ENCODE measurements at regions of chr13 and their contacts with region 1.

Region 1: DNA sequence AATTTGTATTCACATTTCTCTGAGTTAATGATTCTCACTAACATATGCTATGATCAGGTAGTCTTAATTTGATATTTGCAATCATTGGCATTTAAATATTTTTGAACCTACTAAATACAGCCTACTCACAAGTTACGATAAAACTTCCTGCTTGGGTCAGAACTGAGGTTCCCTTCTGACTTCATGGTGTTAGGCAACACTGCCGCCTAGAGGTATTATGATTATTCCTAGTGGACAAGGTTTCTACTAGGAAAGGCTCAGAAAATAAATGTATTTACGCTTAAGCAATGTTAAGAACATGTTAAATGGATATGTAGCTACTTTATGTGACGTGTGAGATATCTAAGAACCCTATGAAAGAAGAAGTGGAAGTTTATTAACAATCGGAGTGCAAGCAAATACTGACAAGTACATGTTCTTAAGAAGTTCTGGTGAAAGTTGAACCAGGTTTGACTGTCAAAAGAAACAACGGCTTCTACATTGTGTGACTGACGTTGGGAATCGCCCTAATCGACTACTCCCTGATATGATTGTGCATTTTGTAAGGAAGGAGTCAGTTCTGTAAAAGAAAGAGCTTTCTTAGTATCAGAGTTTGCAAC is 1395.8 kb downstream of the SLITRK5 start:
- DNase-seq: peak; percentile 46
- ATAC-seq: peak; percentile 55
- H3K4me3 Mint-ChIP-seq: no peak overlapping the region
- H3K27ac Mint-ChIP-seq: no peak overlapping the region
- H3K4me1 Mint-ChIP-seq: no peaks in the 10 kb centered on the region
- H3K27me3 Mint-ChIP-seq: no peaks in the 10 kb centered on the region

Region 2: GRCh38 chr13:87671031-87671752 is 1395.8 kb before region 1 on chr13 and contains the start of gene SLITRK5:
- CTCF ChIA-PET with region 1: no interaction called
- POLR2A ChIA-PET with region 1: no interaction called
- intact Hi-C with region 1: loop called in 1 of 2 experiments (anchors 5 kb)
- DNase-seq: peak; percentile 84
- ATAC-seq: peak; percentile 95
- H3K4me3 Mint-ChIP-seq: peak within 1 kb of the TSS; percentile 52
- H3K27ac Mint-ChIP-seq: no peak within 1 kb of the TSS
- H3K4me1 Mint-ChIP-seq: peaks cover 23% of the 10 kb centered on the region
- H3K27me3 Mint-ChIP-seq: peaks cover 43% of the 10 kb centered on the region
- total RNA-seq, gene SLITRK5: not detected

Region 3: DNA sequence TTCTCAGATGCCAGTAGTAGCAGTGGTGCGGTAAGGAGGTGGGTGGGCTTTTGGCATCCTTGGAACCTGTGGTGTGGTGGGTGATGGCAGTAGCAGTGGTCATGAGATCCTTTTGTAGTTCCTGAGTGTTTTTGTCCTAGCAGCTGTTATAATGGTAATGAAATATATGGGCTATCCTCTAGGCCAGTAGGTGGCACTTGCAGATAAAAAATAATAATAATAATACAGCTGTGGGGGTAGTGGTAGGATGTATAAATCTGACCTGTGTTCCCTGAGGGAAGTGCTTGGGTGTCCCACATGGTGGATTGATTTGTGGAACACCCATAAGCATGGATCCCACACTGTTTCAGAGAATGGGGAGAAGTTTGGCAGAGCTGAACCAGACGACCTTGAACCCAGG is 1061.8 kb before region 1 on chr13:
- CTCF ChIA-PET with region 1: no interaction called
- POLR2A ChIA-PET with region 1: no interaction called
- intact Hi-C with region 1: loop called (anchors 2 to 5 kb)
- DNase-seq: no peak
- ATAC-seq: no peak
- H3K4me3 Mint-ChIP-seq: no peak overlapping the region
- H3K27ac Mint-ChIP-seq: no peak overlapping the region
- H3K4me1 Mint-ChIP-seq: no peaks in the 10 kb centered on the region
- H3K27me3 Mint-ChIP-seq: no peaks in the 10 kb centered on the region

Region 4: DNA sequence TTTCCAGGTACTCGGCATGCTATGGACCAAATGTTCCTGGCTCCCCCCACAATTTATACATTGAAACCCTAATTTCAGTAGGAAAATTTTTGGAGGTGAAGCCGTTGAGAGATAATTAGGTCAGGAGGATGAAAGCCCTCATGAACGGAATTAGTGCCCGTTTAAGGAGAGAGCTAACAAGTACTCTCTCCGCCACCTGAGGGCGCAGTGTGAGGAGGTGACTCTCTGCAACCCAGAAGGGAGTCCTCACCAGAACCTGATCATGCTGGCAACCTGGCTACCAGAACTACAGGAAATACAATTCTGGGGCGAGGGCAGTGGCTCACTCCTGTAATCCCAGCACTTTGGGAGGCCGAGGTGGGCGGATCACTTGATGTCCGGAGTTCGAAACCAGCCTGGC is 998.0 kb before region 1 on chr13:
- CTCF ChIA-PET with region 1: no interaction called
- POLR2A ChIA-PET with region 1: no interaction called
- intact Hi-C with region 1: loop called in 1 of 2 experiments (anchors 5 kb)
- DNase-seq: peak; percentile 36
- ATAC-seq: no peak
- H3K4me3 Mint-ChIP-seq: no peak overlapping the region
- H3K27ac Mint-ChIP-seq: no peak overlapping the region
- H3K4me1 Mint-ChIP-seq: no peaks in the 10 kb centered on the region
- H3K27me3 Mint-ChIP-seq: no peaks in the 10 kb centered on the region

Region 5: GRCh38 chr13:88136098-88136790 is 930.7 kb before region 1 on chr13:
- CTCF ChIA-PET with region 1: no interaction called
- POLR2A ChIA-PET with region 1: no interaction called
- intact Hi-C with region 1: no loop called
- DNase-seq: no peak
- ATAC-seq: no peak
- H3K4me3 Mint-ChIP-seq: no peak overlapping the region
- H3K27ac Mint-ChIP-seq: no peak overlapping the region
- H3K4me1 Mint-ChIP-seq: no peaks in the 10 kb centered on the region
- H3K27me3 Mint-ChIP-seq: no peaks in the 10 kb centered on the region